SK-N-SH (cell line): ENCODE measurements at regions of chr17 and their contacts with region 1.

Region 1: GRCh38 chr17:47675380-47676198 is 18.4 kb upstream of the TBKBP1 start:
- DNase-seq: no peak
- H3K4me3 ChIP-seq: no peak overlapping the region
- H3K27ac ChIP-seq: no peak overlapping the region
- H3K4me1 ChIP-seq: no peaks in the 10 kb centered on the region
- H3K27me3 ChIP-seq: no peaks in the 10 kb centered on the region
- CTCF ChIP-seq: no peak
- EP300 ChIP-seq: no peak
- RAD21 ChIP-seq: no peak

Region 2: GRCh38 chr17:47624727-47625068 is 50.9 kb before region 1 on chr17:
- CTCF ChIA-PET with region 1: no interaction called
- POLR2A ChIA-PET with region 1: no interaction called
- DNase-seq: no peak
- H3K4me3 ChIP-seq: no peak overlapping the region
- H3K27ac ChIP-seq: no peak overlapping the region
- H3K4me1 ChIP-seq: peaks cover 0 to 19% of the 10 kb centered on the region in 2 experiments; a peak in 2 of 4 replicates
- H3K27me3 ChIP-seq: no peaks in the 10 kb centered on the region
- CTCF ChIP-seq: no peak
- EP300 ChIP-seq: no peak
- RAD21 ChIP-seq: no peak

Region 3: GRCh38 chr17:47742319-47743181 is 67.0 kb after region 1 on chr17:
- CTCF ChIA-PET with region 1: interaction called, 13 read pairs
- POLR2A ChIA-PET with region 1: no interaction called
- DNase-seq: peak; percentile 95
- H3K4me3 ChIP-seq: no peak overlapping the region; a peak in 1 of 4 replicates
- H3K27ac ChIP-seq: no peak overlapping the region
- H3K4me1 ChIP-seq: peaks cover 0 to 6% of the 10 kb centered on the region in 2 experiments; a peak in 1 of 4 replicates
- H3K27me3 ChIP-seq: peaks cover 86% of the 10 kb centered on the region
- CTCF ChIP-seq: peak; percentile 61
- EP300 ChIP-seq: no peak
- RAD21 ChIP-seq: peak; percentile 88